Common myeloid progenitor, CD34-positive (primary cell): ENCODE measurements at regions of chr9 and their contacts with region 1.

Region 1: GRCh38 chr9:107340920-107341632 is 58.0 kb downstream of the RAD23B start:
- DNase-seq: peak; percentile 53 to 72 (median 71)
- H3K4me3 ChIP-seq: no peak overlapping the region
- H3K27ac ChIP-seq: no peak overlapping the region
- H3K4me1 ChIP-seq: peaks cover 0 to 2% (median 0%) of the 10 kb centered on the region in 4 experiments
- H3K27me3 ChIP-seq: no peaks in the 10 kb centered on the region

Region 2: DNA sequence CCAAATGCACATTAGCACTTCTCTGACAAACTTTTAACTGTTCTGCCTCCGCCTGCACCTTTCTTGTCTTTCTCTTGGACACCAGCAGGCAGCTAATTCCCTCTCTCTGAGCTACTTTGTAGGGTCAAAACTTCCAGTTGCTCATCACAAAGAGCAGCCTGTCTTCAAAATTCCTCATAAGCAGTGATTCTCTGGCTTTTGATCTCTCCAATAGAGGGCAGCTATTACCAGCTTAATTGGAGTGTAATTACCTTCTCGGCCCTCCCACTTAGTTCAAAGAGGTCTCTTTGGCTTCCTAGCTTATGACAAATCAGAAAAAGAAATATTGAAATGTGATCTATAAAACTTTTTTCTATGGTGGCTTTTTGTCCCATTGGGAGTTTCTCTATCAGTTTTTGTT is 101.6 kb before region 1 on chr9:
- CTCF ChIA-PET with region 1: interaction called, 38 read pairs
- POLR2A ChIA-PET with region 1: no interaction called
- DNase-seq: peak; percentile 55 to 62 (median 59)
- H3K4me3 ChIP-seq: no peak overlapping the region
- H3K27ac ChIP-seq: no peak overlapping the region
- H3K4me1 ChIP-seq: no peaks in the 10 kb centered on the region
- H3K27me3 ChIP-seq: no peaks in the 10 kb centered on the region

Region 3: DNA sequence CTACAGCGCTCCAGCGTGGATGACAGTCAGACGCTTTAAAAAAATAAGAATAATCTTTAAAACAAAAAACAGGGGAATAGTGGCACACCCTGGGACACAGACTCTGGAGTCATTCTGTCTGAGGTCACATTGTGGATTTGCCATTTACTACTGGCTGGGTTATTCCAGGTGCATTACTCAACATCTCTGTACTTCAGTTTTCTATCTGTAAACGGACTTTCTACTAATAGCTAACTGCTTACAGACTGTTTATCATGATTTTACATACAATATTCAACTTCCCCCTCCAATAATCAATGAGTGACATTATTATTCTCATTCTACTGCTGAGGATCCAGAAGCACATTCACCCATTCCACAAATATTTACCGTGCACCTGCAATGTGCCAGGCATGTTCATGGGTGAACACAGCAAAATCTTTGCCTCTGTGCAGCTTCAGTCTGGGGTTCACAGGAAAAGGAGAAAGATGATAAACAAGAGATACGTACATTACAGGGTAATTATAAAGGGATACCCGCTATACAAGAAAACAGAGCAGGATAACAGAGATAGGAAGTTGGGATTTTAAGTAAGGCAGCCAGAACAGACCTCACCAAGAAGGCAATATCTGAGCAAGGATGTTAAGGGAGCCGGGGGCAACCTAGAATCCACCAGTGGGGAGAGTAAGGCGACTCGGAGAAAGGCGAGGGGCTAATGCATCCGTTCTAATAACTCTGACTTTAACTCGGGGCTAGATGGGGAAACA is 59.0 kb before region 1 on chr9:
- CTCF ChIA-PET with region 1: interaction called, 10 read pairs
- POLR2A ChIA-PET with region 1: interaction called, 3 read pairs
- DNase-seq: peak in 2 of 3 donors; percentile 9 to 18
- H3K4me3 ChIP-seq: peak overlapping the region; percentile 79 to 96 (median 92)
- H3K27ac ChIP-seq: peak overlapping the region in 1 of 2 experiments; percentile 71
- H3K4me1 ChIP-seq: peaks cover 4 to 33% (median 28%) of the 10 kb centered on the region in 4 experiments
- H3K27me3 ChIP-seq: no peaks in the 10 kb centered on the region

Region 4: GRCh38 chr9:107328510-107328909 is 12.6 kb before region 1 on chr9:
- CTCF ChIA-PET with region 1: interaction called, 22 read pairs
- POLR2A ChIA-PET with region 1: no interaction called
- DNase-seq: no peak
- H3K4me3 ChIP-seq: no peak overlapping the region
- H3K27ac ChIP-seq: no peak overlapping the region
- H3K4me1 ChIP-seq: no peaks in the 10 kb centered on the region
- H3K27me3 ChIP-seq: no peaks in the 10 kb centered on the region